AG04449 (cell line): ENCODE measurements at regions of chr12 and their contacts with region 1.

Region 1: DNA sequence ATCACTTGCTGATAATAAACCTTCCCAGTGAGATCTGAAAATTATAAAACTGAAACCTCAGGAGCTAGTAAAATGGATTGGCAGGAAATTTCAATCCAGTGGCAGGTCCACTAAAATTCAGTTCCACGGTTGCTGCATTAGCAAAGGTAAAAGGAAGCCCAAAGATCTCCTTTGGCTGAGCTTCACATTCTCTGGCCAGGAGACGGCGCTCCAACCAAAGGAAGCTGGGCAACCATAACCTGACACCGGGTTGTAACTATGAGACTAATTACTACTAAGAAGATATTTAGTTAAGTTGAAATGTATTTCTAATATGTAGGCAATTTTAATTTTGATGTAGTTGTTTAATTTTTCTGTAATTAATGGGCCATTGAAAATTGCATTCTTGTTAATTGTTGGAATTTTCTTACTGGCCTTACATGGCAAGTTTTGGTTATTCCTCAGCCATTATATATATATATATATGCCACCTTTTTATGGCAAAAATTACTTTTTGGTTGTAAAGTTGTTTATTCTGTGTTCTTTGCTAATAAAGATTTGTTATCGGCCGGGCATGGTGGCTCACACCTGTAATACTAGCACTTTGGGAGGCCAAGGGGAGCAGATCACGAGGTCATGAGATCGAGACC is 17.0 kb downstream of the OR8S1 start:
- DNase-seq: no peak
- H3K4me3 ChIP-seq: no peak overlapping the region
- CTCF ChIP-seq: peak; percentile 56

Region 2: GRCh38 chr12:48556631-48557030 is 14.2 kb after region 1 on chr12:
- CTCF ChIA-PET with region 1: interaction called, 13 read pairs
- POLR2A ChIA-PET with region 1: no interaction called
- DNase-seq: no peak
- H3K4me3 ChIP-seq: no peak overlapping the region
- CTCF ChIP-seq: no peak